ENCODE measurements at regions of chr15 and their contacts with region 1.

Region 1: DNA sequence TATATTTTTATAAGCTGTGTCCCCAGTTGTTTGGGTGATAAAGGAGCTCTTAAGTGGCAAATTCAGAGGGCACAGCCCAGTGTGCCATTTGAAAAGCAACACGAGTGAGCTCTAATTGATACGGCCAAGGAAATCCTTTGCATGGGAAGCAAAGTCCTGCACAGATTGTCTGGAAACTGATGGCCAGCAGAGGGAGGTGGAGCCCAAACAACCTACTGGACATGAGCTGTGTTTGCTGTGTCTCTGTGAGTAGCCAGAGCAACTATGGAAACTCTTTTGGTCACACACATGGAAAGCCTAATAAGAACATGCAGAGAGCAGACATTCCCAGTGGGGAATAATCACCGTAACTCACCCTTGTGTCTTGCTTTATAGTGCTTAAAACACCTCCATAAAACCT is 24.4 kb downstream of the ONECUT1 start:
- DNase-seq: no peak
- H3K4me3 ChIP-seq: no peak overlapping the region
- H3K27ac ChIP-seq: no peak overlapping the region
- H3K4me1 ChIP-seq: no peaks in the 10 kb centered on the region; a peak in 1 of 7 replicates
- H3K27me3 ChIP-seq: no peaks in the 10 kb centered on the region; a peak in 1 of 7 replicates
- CTCF ChIP-seq: peak; percentile 16 to 59 (median 48); a peak in 3 of 4 replicates
- EP300 ChIP-seq: no peak
- POLR2A ChIP-seq: no peak
- RAD21 ChIP-seq: peak; percentile 62 to 70

Region 2: DNA sequence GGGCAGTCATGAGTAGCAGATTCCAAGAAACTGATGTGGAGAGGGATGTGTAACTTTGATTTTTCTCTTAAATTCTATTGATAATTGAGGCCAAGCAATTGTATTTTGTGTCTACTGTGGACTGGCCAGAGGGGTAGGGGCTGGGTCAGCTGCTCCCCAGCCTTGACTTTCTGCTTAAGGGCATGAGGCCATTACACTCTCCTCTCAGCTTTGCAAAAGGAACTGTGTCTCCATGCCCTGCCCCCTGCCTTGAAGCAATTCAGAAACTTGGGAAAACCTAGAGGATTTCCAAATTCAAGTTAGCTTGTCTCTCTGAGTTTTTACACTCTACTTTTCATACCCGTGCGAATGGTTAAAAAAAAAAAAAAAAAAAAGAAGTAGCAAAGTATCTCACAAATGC is 14.3 kb before region 1 on chr15:
- CTCF ChIA-PET with region 1: interaction called, 13 read pairs
- POLR2A ChIA-PET with region 1: interaction called, 4 read pairs
- DNase-seq: no peak
- H3K4me3 ChIP-seq: no peak overlapping the region
- H3K27ac ChIP-seq: no peak overlapping the region
- H3K4me1 ChIP-seq: peaks cover 3 to 25% (median 18%) of the 10 kb centered on the region in 4 experiments; a peak in 5 of 7 replicates
- H3K27me3 ChIP-seq: no peaks in the 10 kb centered on the region
- CTCF ChIP-seq: no peak
- EP300 ChIP-seq: no peak
- POLR2A ChIP-seq: no peak
- RAD21 ChIP-seq: no peak

Region 3: GRCh38 chr15:52780172-52780980 is 14.6 kb after region 1 on chr15:
- CTCF ChIA-PET with region 1: interaction called, 35 read pairs
- POLR2A ChIA-PET with region 1: no interaction called
- DNase-seq: peak in 1 of 2 experiments; percentile 88
- H3K4me3 ChIP-seq: no peak overlapping the region
- H3K27ac ChIP-seq: no peak overlapping the region
- H3K4me1 ChIP-seq: peaks cover 4 to 32% (median 8%) of the 10 kb centered on the region in 4 experiments; a peak in 6 of 7 replicates
- H3K27me3 ChIP-seq: peaks cover 14 to 36% (median 29%) of the 10 kb centered on the region in 4 experiments
- CTCF ChIP-seq: peak; percentile 73 to 88 (median 83)
- EP300 ChIP-seq: no peak
- POLR2A ChIP-seq: no peak
- RAD21 ChIP-seq: peak; percentile 85 to 90

Region 4: GRCh38 chr15:53197426-53197839 is 431.6 kb after region 1 on chr15:
- CTCF ChIA-PET with region 1: interaction called, 12 read pairs
- POLR2A ChIA-PET with region 1: no interaction called
- DNase-seq: peak; percentile 73 to 86
- H3K4me3 ChIP-seq: peak overlapping the region in 1 of 4 experiments; percentile 21; a peak in 1 of 8 replicates
- H3K27ac ChIP-seq: no peak overlapping the region
- H3K4me1 ChIP-seq: peaks cover 0 to 5% (median 4%) of the 10 kb centered on the region in 4 experiments; a peak in 4 of 7 replicates
- H3K27me3 ChIP-seq: no peaks in the 10 kb centered on the region; a peak in 2 of 7 replicates
- CTCF ChIP-seq: peak; percentile 86 to 91 (median 89)
- EP300 ChIP-seq: no peak
- POLR2A ChIP-seq: no peak
- RAD21 ChIP-seq: peak; percentile 90 to 97